Activated B cell treated with CpG ODN at 0.5 μM for 24 hours (primary cell): ENCODE measurements at regions of chr15 and their contacts with region 1.

Region 1: DNA sequence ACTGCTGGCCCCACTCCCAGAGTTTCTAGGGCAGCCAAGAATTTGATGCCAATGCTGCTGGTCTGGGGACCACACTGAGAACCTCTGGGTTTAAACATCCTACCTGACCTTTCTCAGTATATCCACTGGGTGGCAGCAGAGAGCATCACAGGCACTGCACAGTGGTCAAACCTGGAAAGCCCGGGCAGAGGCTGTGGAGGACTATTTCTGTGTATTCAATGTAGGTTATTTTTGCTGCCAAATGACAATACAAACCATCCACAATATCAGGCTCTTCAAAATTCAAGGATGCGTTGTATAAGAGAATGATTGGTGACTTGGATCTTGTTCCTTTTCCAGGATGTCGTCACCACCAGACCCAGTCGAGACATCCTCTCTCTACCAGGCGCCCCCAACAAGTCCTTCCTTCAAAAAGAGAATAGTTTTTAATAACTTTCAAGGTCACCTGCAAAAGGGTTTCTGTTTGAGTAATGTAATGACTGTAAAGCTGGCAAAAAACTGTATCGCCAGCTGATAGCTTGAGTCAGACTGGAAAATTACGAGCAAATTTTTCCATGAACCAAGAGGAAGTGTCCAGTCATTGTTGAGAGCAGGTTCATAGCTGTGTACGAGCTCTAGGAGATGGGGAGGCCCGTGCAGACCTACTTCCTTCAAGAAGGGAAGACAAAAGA is 30.5 kb upstream of the MYZAP start:
- DNase-seq: peak; percentile 32
- ATAC-seq: peak; percentile 84
- H3K4me3 Mint-ChIP-seq: peak overlapping the region; percentile 56
- H3K27ac Mint-ChIP-seq: peak overlapping the region; percentile 68
- H3K4me1 Mint-ChIP-seq: peaks cover 37% of the 10 kb centered on the region
- H3K27me3 Mint-ChIP-seq: peaks cover 6% of the 10 kb centered on the region
- CTCF ChIP-seq: peak; percentile 53

Region 2: DNA sequence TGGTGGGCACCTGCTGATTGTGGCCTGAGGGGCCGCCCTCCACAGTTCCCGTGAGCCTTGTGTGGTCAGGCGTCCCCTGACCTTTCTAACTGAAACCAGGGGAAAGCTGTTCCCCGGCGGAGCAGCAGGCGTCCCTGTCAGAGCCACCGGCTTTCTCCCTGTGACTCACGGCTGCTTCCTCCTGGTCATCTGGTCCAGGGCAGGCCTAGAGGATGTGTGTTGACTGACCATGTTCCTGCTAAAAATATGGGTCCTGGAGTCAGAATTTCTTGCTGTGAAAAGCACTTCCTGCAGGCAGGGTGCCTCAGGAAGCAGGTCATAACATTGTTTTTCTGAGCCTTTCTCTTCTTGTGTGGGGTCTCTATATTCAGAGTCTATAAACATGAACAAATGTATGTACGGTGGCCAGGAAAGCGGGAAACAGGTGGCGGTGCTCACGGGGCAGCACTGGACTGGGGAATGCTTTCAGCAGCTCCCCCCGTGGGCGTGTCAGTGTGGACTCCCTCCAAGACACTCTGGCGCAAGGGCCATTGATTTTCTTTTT is 223.2 kb before region 1 on chr15:
- CTCF ChIA-PET with region 1: no interaction called
- POLR2A ChIA-PET with region 1: no interaction called
- intact Hi-C with region 1: no loop called
- DNase-seq: no peak
- ATAC-seq: no peak
- H3K4me3 Mint-ChIP-seq: no peak overlapping the region
- H3K27ac Mint-ChIP-seq: no peak overlapping the region
- H3K4me1 Mint-ChIP-seq: peaks cover 2% of the 10 kb centered on the region
- H3K27me3 Mint-ChIP-seq: peaks cover 12% of the 10 kb centered on the region
- CTCF ChIP-seq: no peak

Region 3: DNA sequence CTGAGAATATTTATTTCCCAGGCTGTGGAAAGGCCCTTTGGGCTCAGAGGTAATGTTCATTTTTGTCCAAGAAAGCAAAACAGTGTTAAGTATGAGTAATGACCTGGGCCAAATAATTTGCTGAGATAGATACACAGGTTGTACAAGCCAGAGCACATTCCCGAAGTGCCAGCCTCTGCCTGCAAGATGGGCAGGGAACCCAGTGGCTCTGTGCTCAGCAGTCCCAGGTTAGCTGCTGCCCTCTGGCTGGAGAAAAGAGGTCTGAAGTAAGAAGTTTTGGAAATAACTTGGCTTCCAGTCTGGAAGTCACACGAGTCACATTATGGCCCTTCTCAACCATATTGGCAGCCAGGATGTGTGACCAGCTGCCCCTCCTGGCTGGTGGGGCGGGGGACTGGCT is 50.8 kb after region 1 on chr15:
- CTCF ChIA-PET with region 1: interaction called, 8 read pairs
- POLR2A ChIA-PET with region 1: no interaction called
- intact Hi-C with region 1: loop called (anchors 1 kb)
- DNase-seq: no peak
- ATAC-seq: no peak
- H3K4me3 Mint-ChIP-seq: no peak overlapping the region
- H3K27ac Mint-ChIP-seq: no peak overlapping the region
- H3K4me1 Mint-ChIP-seq: no peaks in the 10 kb centered on the region
- H3K27me3 Mint-ChIP-seq: no peaks in the 10 kb centered on the region
- CTCF ChIP-seq: no peak

Region 4: DNA sequence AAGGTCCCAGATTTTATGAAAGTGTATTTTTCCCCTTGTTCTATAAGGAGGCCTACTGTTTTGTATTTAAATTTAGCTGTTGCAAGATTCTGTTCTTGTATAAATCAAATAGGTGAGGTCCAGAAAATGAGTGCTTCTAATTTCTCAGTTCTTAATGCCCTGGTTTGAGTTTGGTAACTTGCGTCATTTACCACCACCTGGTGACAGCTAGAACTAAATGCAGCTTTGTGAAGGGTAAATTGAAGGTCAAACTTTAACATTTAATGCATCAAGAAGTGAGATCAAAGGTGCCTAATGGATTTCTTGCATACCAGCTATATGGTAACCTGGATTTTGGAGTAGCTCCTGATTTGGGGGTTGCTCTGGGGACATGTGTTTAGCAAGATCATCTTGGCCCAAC is 94.6 kb after region 1 on chr15:
- CTCF ChIA-PET with region 1: interaction called, 4 read pairs
- POLR2A ChIA-PET with region 1: no interaction called
- intact Hi-C with region 1: loop called (anchors 1 kb)
- DNase-seq: no peak
- ATAC-seq: no peak
- H3K4me3 Mint-ChIP-seq: no peak overlapping the region
- H3K27ac Mint-ChIP-seq: no peak overlapping the region
- H3K4me1 Mint-ChIP-seq: no peaks in the 10 kb centered on the region
- H3K27me3 Mint-ChIP-seq: peaks cover 6% of the 10 kb centered on the region
- CTCF ChIP-seq: no peak

Region 5: GRCh38 chr15:57861036-57861638 is 300.0 kb after region 1 on chr15:
- CTCF ChIA-PET with region 1: interaction called, 48 read pairs
- POLR2A ChIA-PET with region 1: interaction called, 5 read pairs
- intact Hi-C with region 1: loop called (anchors 1 kb)
- DNase-seq: no peak
- ATAC-seq: no peak
- H3K4me3 Mint-ChIP-seq: no peak overlapping the region
- H3K27ac Mint-ChIP-seq: no peak overlapping the region
- H3K4me1 Mint-ChIP-seq: no peaks in the 10 kb centered on the region
- H3K27me3 Mint-ChIP-seq: peaks cover 28% of the 10 kb centered on the region
- CTCF ChIP-seq: peak; percentile 86